Endothelial cell of umbilical vein (primary cell): ENCODE measurements at regions of chr4 and their contacts with region 1.

Region 1: DNA sequence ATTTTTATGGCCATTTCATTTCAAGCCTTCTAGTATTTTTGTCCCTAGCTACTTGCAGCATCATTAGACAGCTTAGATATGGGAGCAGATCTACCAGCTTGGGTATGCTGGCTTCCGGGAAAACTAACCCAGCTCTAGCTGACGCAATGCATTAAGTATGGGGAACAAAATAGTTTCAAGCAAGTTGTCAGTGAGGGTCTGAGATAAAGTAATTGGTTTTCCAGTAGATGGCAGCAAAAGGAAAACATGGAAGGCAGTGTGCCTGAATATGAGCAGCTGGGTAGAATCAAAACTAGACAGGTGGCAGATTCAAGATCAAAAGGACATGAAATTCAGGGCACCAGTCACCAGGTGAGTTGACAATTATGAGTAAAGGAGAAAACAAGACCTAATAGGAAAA is 340.9 kb upstream of the CTSO start:
- DNase-seq: peak; percentile 43
- H3K4me3 ChIP-seq: no peak overlapping the region
- H3K27ac ChIP-seq: peak overlapping the region; percentile 29
- H3K4me1 ChIP-seq: peaks cover 7% of the 10 kb centered on the region
- H3K27me3 ChIP-seq: no peaks in the 10 kb centered on the region
- CTCF ChIP-seq: no peak
- POLR2A ChIP-seq: no peak

Region 2: DNA sequence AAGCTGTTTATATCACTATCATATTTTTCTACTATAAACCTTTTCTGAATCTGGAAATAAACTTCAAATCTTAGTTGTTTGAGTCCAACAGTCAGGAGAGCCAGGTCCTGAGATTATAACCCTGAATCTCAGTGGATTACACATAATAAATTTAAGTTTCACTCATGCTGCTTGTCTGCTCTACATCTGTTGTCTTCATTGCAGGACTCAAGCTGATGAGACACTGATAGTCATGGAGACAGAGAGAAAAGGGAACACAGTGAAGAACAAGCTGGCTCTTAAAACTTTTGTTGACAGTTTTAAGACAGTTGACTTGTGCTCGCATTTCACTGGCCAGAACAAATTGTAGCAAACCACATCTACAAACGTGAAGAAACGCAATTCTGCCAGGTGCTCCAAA is 13.9 kb before region 1 on chr4:
- CTCF ChIA-PET with region 1: interaction called, 10 read pairs
- POLR2A ChIA-PET with region 1: no interaction called
- dilution Hi-C with region 1: no loop called
- intact Hi-C with region 1: no loop called
- DNase-seq: no peak
- H3K4me3 ChIP-seq: no peak overlapping the region
- H3K27ac ChIP-seq: no peak overlapping the region
- H3K4me1 ChIP-seq: no peaks in the 10 kb centered on the region
- H3K27me3 ChIP-seq: no peaks in the 10 kb centered on the region
- CTCF ChIP-seq: no peak
- POLR2A ChIP-seq: no peak

Region 3: GRCh38 chr4:156347412-156348075 is 53.0 kb after region 1 on chr4:
- CTCF ChIA-PET with region 1: no interaction called
- POLR2A ChIA-PET with region 1: no interaction called
- dilution Hi-C with region 1: no loop called
- intact Hi-C with region 1: no loop called
- DNase-seq: no peak
- H3K4me3 ChIP-seq: no peak overlapping the region
- H3K27ac ChIP-seq: no peak overlapping the region
- H3K4me1 ChIP-seq: no peaks in the 10 kb centered on the region
- H3K27me3 ChIP-seq: no peaks in the 10 kb centered on the region
- CTCF ChIP-seq: no peak
- POLR2A ChIP-seq: no peak